HepG2 (cell line): ENCODE measurements at regions of chr5 and their contacts with region 1.

Region 1: DNA sequence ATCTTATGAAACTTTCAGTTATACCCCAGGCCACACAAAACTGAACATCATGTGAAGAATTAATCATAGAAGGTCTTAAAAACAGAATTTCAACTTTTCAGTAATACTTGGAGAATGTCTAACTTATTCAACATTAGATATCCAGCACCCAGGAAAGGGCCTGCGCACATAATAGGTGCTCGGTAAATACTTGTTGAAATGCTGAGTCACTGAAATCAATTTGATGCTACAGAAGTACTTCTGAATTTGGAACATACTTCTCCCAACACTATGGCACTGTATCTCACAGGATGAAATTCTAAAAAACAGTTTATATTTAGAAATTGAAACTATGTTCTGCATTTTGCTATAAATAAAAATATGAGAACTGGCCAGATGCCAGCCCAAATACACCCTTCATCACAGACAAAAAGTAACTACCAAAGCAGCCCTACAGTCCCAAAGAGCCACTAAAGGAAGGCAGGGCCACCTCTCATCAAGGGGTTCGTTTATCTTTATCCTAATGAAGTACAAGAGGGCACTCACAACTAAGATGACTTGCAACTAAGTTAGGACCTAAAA is 26.5 kb downstream of the MRPS27 start:
- DNase-seq: no peak
- ATAC-seq: no peak
- H3K4me3 ChIP-seq: no peak overlapping the region
- H3K27ac ChIP-seq: peak overlapping the region; percentile 29
- H3K4me1 ChIP-seq: peaks cover 54% of the 10 kb centered on the region
- H3K27me3 ChIP-seq: no peaks in the 10 kb centered on the region
- CTCF ChIP-seq: no peak
- EP300 ChIP-seq: no peak
- POLR2A ChIP-seq: no peak
- RAD21 ChIP-seq: no peak

Region 2: GRCh38 chr5:72234265-72234700 is 59.3 kb before region 1 on chr5:
- CTCF ChIA-PET with region 1: no interaction called
- POLR2A ChIA-PET with region 1: no interaction called
- in situ Hi-C with region 1: no loop called
- intact Hi-C with region 1: no loop called
- DNase-seq: no peak
- ATAC-seq: no peak
- H3K4me3 ChIP-seq: no peak overlapping the region
- H3K27ac ChIP-seq: no peak overlapping the region
- H3K4me1 ChIP-seq: no peaks in the 10 kb centered on the region
- H3K27me3 ChIP-seq: no peaks in the 10 kb centered on the region
- CTCF ChIP-seq: no peak
- EP300 ChIP-seq: no peak
- POLR2A ChIP-seq: no peak
- RAD21 ChIP-seq: no peak

Region 3: DNA sequence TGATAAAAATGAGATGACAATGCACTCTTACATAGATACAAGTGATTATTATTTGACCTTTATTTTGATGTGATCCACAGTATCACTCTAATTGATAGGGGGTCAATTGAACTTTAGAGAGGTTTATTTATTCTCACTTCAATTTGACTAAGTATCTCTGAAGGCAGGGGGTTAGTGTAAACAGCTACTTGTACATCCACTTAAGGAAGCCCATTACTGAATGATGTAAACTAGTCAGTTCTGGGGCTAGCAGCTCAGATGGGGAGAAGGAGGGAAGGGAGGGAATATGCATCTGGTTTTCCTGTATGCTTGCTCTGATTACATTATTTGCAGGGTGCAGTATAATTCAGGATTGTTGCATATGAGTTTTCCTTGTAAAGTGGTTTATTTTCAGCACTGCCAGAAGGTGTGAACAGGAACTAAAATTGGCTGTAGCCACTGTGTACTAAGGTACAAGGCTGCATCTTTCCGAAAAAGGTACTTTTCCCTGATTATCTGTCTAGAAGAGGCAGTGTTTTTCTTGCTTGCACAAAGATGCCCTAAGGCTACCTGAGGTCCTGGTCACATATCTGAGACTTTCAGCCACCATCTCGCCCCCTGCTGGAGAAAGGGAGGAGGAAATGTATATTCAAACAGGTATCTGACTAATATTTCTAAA is 24.7 kb before region 1 on chr5:
- CTCF ChIA-PET with region 1: no interaction called
- POLR2A ChIA-PET with region 1: no interaction called
- in situ Hi-C with region 1: no loop called
- intact Hi-C with region 1: no loop called
- DNase-seq: peak; percentile 48
- ATAC-seq: peak; percentile 75
- H3K4me3 ChIP-seq: no peak overlapping the region
- H3K27ac ChIP-seq: no peak overlapping the region
- H3K4me1 ChIP-seq: peaks cover 16% of the 10 kb centered on the region
- H3K27me3 ChIP-seq: no peaks in the 10 kb centered on the region
- CTCF ChIP-seq: peak; percentile 61
- EP300 ChIP-seq: no peak
- POLR2A ChIP-seq: no peak
- RAD21 ChIP-seq: no peak

Region 4: GRCh38 chr5:72281764-72282499 is 11.6 kb before region 1 on chr5:
- CTCF ChIA-PET with region 1: no interaction called
- POLR2A ChIA-PET with region 1: interaction called, 10 read pairs
- in situ Hi-C with region 1: no loop called
- intact Hi-C with region 1: no loop called
- DNase-seq: peak; percentile 35
- ATAC-seq: no peak
- H3K4me3 ChIP-seq: no peak overlapping the region
- H3K27ac ChIP-seq: peak overlapping the region; percentile 42
- H3K4me1 ChIP-seq: peaks cover 42% of the 10 kb centered on the region
- H3K27me3 ChIP-seq: no peaks in the 10 kb centered on the region
- CTCF ChIP-seq: no peak
- EP300 ChIP-seq: peak in 1 of 2 experiments; percentile 49; a peak in 1 of 4 replicates
- POLR2A ChIP-seq: no peak
- RAD21 ChIP-seq: no peak

Region 5: GRCh38 chr5:72328172-72328571 is 34.6 kb after region 1 on chr5:
- CTCF ChIA-PET with region 1: no interaction called
- POLR2A ChIA-PET with region 1: no interaction called
- in situ Hi-C with region 1: no loop called
- intact Hi-C with region 1: no loop called
- DNase-seq: no peak
- ATAC-seq: no peak
- H3K4me3 ChIP-seq: no peak overlapping the region
- H3K27ac ChIP-seq: no peak overlapping the region
- H3K4me1 ChIP-seq: no peaks in the 10 kb centered on the region
- H3K27me3 ChIP-seq: no peaks in the 10 kb centered on the region
- CTCF ChIP-seq: no peak
- EP300 ChIP-seq: no peak
- POLR2A ChIP-seq: no peak
- RAD21 ChIP-seq: no peak